Activated CD4-positive, alpha-beta T cell treated with anti-CD3 and anti-CD28 coated beads for 36 hours (primary cell): ENCODE measurements at regions of chr5 and their contacts with region 1.

Region 1: DNA sequence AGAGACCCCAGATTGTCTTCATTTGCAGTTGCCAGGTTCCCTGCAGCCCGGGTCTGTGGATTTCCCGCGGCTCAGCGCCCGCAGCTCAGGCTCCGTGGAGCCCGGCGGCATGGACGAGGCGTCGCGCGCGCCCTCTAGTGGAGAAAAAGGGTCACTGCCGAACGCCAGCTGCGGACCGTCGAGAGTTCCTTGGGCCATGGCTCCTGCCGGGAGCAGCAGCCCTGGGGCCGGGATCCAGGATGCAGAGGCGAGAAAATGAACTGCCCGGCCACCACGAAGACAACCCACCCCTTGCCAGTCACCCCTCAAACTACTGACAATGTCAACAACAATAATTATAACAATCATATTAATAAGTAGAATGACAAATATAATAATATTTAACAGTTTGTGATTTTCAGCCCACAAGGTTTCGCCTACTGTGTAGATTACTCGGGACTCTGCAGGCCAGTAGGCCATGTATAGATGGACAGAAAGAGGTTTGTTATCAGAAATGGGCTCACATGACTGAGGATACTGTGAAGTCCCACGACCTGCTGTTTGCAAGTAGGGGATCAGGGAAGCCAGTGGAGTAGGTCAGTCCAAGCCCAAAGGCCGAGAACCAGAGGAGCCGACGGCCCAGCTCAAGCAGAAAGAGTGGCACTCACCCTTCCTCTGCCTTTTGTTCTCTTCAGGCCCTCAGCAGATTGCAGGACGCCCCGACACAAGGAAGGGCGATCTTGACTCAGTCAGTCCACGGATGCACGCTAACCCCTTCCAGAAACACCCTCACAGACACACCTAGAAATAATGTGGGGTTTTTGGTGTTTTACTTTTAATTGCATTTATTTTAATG is 43.1 kb downstream of the BOD1 start:
- DNase-seq: peak; percentile 80
- ATAC-seq: peak; percentile 76
- H3K4me3 Mint-ChIP-seq: no peak overlapping the region
- H3K27ac Mint-ChIP-seq: no peak overlapping the region
- H3K4me1 Mint-ChIP-seq: peaks cover 5% of the 10 kb centered on the region
- H3K27me3 Mint-ChIP-seq: peaks cover 12% of the 10 kb centered on the region

Region 2: GRCh38 chr5:173293817-173294672 is 279.3 kb before region 1 on chr5:
- CTCF ChIA-PET with region 1: interaction called, 17 read pairs
- POLR2A ChIA-PET with region 1: no interaction called
- intact Hi-C with region 1: loop called (anchors 1 to 2 kb)
- DNase-seq: peak; percentile 87
- ATAC-seq: peak; percentile 85
- H3K4me3 Mint-ChIP-seq: peak overlapping the region; percentile 16
- H3K27ac Mint-ChIP-seq: no peak overlapping the region
- H3K4me1 Mint-ChIP-seq: peaks cover 12% of the 10 kb centered on the region
- H3K27me3 Mint-ChIP-seq: peaks cover 32% of the 10 kb centered on the region

Region 3: DNA sequence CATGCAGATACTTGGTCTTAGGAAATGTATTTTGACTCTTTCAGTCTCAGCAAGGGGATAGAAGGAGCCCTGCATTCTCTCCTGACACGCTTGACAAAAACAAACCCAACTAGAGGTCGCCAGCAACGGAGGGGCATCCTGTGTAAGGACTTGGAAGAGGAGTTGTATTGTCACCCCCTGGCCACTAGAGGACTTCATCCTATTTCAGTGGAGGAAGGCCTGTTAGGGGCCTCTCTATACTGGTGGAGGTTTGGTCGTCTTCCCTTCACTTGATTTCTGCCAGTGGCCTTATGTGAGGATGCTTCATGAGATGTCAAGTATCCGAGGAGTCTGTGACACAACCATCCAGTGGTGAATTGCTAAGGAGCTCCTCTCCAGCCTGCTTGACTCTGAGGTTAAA is 122.3 kb before region 1 on chr5:
- CTCF ChIA-PET with region 1: interaction called, 3 read pairs
- POLR2A ChIA-PET with region 1: no interaction called
- intact Hi-C with region 1: loop called in 1 of 2 experiments (anchors 5 kb)
- DNase-seq: peak; percentile 24
- ATAC-seq: no peak
- H3K4me3 Mint-ChIP-seq: no peak overlapping the region
- H3K27ac Mint-ChIP-seq: no peak overlapping the region
- H3K4me1 Mint-ChIP-seq: no peaks in the 10 kb centered on the region
- H3K27me3 Mint-ChIP-seq: peaks cover 1% of the 10 kb centered on the region

Region 4: DNA sequence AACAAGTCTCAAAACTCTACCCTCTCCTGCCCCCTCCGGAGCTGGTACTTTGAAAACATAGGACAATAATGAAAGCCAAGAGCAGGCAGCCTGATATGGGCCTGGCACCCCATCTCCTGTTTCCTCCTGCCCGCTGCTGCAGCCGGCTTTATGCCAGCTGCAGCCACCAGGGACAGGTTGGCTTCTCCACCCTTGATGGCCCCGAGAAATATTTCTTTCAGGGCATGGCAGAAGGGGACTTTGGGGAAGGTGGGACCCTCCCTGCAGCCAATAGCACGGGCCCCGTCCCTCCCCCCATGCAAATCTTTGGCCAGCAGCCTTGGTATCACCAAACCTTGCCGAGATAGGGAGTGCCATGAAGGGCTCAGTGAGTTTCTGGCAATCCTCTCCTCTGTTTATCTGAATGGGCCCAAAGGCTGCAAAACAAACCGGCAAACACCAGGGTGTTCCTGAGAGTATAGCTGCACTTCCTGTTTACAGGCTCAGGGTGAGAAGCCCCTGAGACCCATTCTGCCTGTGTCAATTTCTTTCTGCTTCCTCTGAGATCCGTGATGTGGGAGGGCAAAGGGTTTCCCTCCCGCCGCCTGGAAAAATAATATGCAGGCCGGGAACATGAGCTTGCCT is 116.5 kb after region 1 on chr5:
- CTCF ChIA-PET with region 1: no interaction called
- POLR2A ChIA-PET with region 1: no interaction called
- intact Hi-C with region 1: no loop called
- DNase-seq: no peak
- ATAC-seq: no peak
- H3K4me3 Mint-ChIP-seq: no peak overlapping the region
- H3K27ac Mint-ChIP-seq: no peak overlapping the region
- H3K4me1 Mint-ChIP-seq: peaks cover 8% of the 10 kb centered on the region
- H3K27me3 Mint-ChIP-seq: no peaks in the 10 kb centered on the region

Region 5: GRCh38 chr5:174725261-174725989 is 1152.1 kb after region 1 on chr5:
- CTCF ChIA-PET with region 1: no interaction called
- POLR2A ChIA-PET with region 1: no interaction called
- intact Hi-C with region 1: no loop called
- DNase-seq: no peak
- ATAC-seq: no peak
- H3K4me3 Mint-ChIP-seq: peak overlapping the region; percentile 24
- H3K27ac Mint-ChIP-seq: no peak overlapping the region
- H3K4me1 Mint-ChIP-seq: peaks cover 10% of the 10 kb centered on the region
- H3K27me3 Mint-ChIP-seq: peaks cover 74% of the 10 kb centered on the region